ENCODE measurements at regions of chr11 and their contacts with region 1.

Region 1: DNA sequence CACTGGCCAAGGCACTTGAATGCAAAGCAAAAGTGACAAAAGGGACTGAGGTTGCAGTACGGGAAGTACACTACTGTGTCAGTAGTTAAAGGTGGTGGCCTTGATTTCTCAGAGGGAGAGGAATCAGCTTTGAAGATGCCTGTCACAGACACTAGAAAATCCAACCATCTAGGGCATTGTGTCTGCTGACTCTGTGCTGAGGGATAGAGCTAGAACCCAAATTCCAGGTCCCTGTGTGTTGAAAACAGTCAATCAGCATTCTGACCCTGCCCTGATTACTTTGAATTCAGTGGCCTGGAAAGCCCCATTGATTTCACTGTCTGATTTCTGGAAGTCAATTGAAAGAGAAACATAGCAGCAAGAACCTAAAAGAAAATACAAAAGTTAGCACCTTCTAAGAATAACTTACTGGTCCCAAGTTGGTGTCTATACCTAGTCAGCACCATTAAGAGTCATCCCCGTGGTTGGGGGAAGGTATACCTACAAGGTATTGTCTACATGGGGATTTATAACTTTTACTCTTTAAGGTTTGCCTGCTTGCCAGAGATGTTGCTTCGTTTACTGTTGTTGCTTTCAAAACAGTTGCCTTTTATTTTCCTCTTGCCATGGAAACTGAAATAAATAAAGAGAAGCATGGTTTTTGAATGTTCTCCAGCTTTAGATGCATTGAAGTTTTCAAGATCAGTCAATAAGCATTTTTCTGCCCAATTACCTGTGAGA is 97.3 kb downstream of the PDHX start:
- DNase-seq: peak; percentile 61 to 87 (median 75)
- H3K4me3 ChIP-seq: no peak overlapping the region
- H3K4me3 Mint-ChIP-seq: peak overlapping the region; percentile 11 to 87 (median 71)
- H3K27ac ChIP-seq: peak overlapping the region; percentile 70
- H3K27ac Mint-ChIP-seq: peak overlapping the region; percentile 93 to 100 (median 97)
- H3K4me1 ChIP-seq: peaks cover 26% of the 10 kb centered on the region
- H3K4me1 Mint-ChIP-seq: peaks cover 23 to 57% (median 37%) of the 10 kb centered on the region in 4 donors
- H3K27me3 ChIP-seq: no peaks in the 10 kb centered on the region
- H3K27me3 Mint-ChIP-seq: no peaks in the 10 kb centered on the region

Region 2: GRCh38 chr11:34685864-34686263 is 327.8 kb before region 1 on chr11:
- CTCF ChIA-PET with region 1: no interaction called
- POLR2A ChIA-PET with region 1: no interaction called
- intact Hi-C with region 1: no loop called
- DNase-seq: no peak
- H3K4me3 ChIP-seq: no peak overlapping the region
- H3K4me3 Mint-ChIP-seq: no peak overlapping the region
- H3K27ac ChIP-seq: no peak overlapping the region
- H3K27ac Mint-ChIP-seq: no peak overlapping the region
- H3K4me1 ChIP-seq: no peaks in the 10 kb centered on the region
- H3K4me1 Mint-ChIP-seq: no peaks in the 10 kb centered on the region
- H3K27me3 ChIP-seq: no peaks in the 10 kb centered on the region
- H3K27me3 Mint-ChIP-seq: no peaks in the 10 kb centered on the region

Region 3: DNA sequence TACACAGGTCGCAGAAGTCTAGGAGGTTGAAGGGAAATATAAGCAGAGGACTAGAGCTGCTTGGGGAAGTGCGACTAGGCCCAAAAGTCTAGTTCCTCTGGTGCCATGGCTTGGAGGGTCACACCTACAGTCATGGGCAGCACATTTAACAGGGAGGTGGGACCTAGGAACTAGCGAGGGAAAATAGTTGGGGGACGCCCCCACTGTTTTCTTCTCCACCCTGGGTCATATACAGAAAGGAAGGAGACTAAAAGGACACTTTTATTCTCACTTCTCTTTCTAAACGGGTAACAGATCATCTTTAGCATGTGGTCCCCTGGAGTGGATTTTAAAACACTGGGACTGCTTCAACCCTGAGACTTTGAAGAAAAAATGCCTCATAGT is 114.0 kb before region 1 on chr11:
- CTCF ChIA-PET with region 1: no interaction called
- POLR2A ChIA-PET with region 1: no interaction called
- intact Hi-C with region 1: no loop called
- DNase-seq: no peak
- H3K4me3 ChIP-seq: no peak overlapping the region
- H3K4me3 Mint-ChIP-seq: no peak overlapping the region
- H3K27ac ChIP-seq: no peak overlapping the region
- H3K27ac Mint-ChIP-seq: no peak overlapping the region
- H3K4me1 ChIP-seq: no peaks in the 10 kb centered on the region
- H3K4me1 Mint-ChIP-seq: peaks cover 4 to 10% (median 7%) of the 10 kb centered on the region in 4 donors
- H3K27me3 ChIP-seq: no peaks in the 10 kb centered on the region
- H3K27me3 Mint-ChIP-seq: no peaks in the 10 kb centered on the region

Region 4: DNA sequence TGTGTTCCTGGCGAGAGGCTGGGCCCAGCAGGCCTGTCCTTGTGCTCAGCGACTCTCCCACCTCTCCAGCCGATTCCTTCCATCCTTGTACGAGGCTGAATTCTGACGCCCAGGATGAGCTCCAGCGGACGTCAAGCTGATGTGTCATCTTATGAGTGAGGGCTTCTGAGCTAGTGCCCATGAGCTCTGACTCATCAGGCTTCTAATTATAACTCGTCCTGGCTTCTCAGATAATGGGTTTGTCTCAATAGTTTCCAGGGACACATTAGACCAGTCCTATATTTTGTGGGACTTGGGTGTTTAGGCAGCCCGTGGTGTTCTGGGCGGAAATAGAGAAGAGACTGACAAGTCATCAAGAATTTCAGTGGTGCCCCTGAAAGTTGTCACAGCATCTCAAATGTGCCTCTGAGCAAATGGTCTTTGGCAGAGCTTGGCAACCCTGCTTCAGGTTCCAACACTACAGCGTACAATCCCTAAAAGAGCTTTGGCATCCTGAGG is 17.1 kb after region 1 on chr11:
- CTCF ChIA-PET with region 1: interaction called, 12 read pairs
- POLR2A ChIA-PET with region 1: interaction called, 16 read pairs
- intact Hi-C with region 1: loop called (anchors 2 kb)
- DNase-seq: peak in 1 of 5 donors; percentile 75
- H3K4me3 ChIP-seq: no peak overlapping the region
- H3K4me3 Mint-ChIP-seq: peak overlapping the region; percentile 3 to 89 (median 78)
- H3K27ac ChIP-seq: peak overlapping the region; percentile 46
- H3K27ac Mint-ChIP-seq: peak overlapping the region; percentile 92 to 98 (median 95)
- H3K4me1 ChIP-seq: peaks cover 44% of the 10 kb centered on the region
- H3K4me1 Mint-ChIP-seq: peaks cover 36 to 62% (median 46%) of the 10 kb centered on the region in 4 donors
- H3K27me3 ChIP-seq: no peaks in the 10 kb centered on the region
- H3K27me3 Mint-ChIP-seq: no peaks in the 10 kb centered on the region